Tibial artery (tissue), 4 donors: ENCODE measurements at regions of chr2 and their contacts with region 1.

Region 1: GRCh38 chr2:219552382-219553167 is 8.7 kb downstream of the TMEM198 start:
- DNase-seq: peak; percentile 88 to 91
- H3K4me3 ChIP-seq: peak overlapping the region; percentile 52 to 65
- H3K27ac ChIP-seq: peak overlapping the region; percentile 46 to 48
- H3K4me1 ChIP-seq: peaks cover 0 to 26% (median 19%) of the 10 kb centered on the region in 4 donors
- H3K27me3 ChIP-seq: no peaks in the 10 kb centered on the region
- CTCF ChIP-seq: no peak

Region 2: DNA sequence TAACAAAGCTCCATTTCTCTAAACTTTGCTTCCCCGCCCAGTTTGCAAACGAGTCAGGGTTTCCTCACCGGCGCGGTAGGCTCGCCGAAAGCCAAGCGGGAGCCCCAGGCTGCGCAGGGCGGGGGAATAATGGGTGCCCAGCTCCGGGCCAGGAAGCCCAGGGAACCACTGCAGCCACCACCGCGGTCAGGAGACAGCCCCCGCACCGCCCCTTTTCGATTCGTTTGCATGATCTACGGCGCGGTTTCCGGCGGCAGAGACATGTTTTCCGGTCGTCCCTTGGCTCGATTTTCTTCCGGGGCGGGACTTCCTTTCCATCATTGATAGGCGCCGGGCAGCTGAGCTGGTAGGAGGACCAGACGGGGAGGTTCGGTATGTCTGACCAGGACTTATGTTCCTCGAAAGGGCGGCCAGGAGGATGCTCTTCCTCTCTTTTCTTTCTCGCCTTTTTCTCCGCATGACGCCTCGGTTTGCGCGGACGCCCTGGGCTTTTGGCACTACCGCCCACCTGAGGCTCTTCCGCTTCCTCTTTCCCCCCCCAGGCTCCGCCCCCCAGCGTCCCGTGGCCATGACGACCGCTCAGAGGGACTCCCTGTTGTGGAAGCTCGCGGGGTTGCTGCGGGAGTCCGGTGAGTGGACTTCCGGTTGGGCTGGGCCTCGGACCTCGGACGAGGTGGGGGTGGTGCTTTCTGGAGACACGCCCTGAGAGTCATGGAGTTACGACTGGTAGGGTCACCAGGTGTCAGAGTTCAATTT is 45.2 kb after region 1 on chr2 and contains the start of gene STK11IP:
- intact Hi-C with region 1: loop called (anchors 5 kb)
- DNase-seq: peak; percentile 99
- H3K4me3 ChIP-seq: peak within 1 kb of the TSS; percentile 63 to 76
- H3K27ac ChIP-seq: peak within 1 kb of the TSS; percentile 84 to 87
- H3K4me1 ChIP-seq: peaks cover 0 to 15% (median 6%) of the 10 kb centered on the region in 4 donors
- H3K27me3 ChIP-seq: no peaks in the 10 kb centered on the region
- CTCF ChIP-seq: peak in 1 of 2 experiments; percentile 6